ENCODE measurements at regions of chr7 and their contacts with region 1.

Region 1: DNA sequence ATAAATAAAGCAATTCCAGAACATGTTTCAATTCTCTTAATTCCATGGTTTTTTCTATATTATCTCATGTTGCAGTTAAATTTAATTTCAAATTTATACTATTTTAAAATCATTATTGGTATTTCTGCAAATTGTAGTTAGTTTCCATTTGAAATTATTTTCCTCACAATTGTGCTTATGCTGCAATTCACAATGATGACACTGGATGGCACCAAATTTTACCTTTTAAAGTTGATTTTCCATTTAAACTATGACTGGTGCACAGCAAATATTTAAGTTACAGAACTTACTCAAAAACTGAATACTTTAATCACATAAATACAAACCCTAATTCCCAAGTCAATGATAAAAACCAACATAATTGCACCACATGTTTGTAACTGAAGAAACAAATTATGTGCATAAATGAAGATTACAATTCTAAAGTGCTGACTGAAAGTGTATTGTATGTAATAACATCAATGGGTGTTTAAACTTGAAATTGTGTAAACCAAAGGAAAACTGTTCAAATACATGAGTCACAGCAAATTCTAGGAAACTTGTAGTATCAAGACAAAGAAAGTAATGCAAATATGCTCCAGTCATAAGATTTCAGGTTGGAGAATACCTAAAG is 75.3 kb upstream of the AASS start:
- DNase-seq: peak; percentile 62
- H3K4me3 ChIP-seq: no peak overlapping the region
- H3K27ac ChIP-seq: no peak overlapping the region
- H3K4me1 ChIP-seq: peaks cover 8% of the 10 kb centered on the region
- H3K27me3 ChIP-seq: no peaks in the 10 kb centered on the region
- CTCF ChIP-seq: peak; percentile 86

Region 2: GRCh38 chr7:121449329-121449728 is 770.0 kb before region 1 on chr7:
- CTCF ChIA-PET with region 1: no interaction called
- POLR2A ChIA-PET with region 1: no interaction called
- intact Hi-C with region 1: no loop called
- DNase-seq: peak; percentile 70
- H3K4me3 ChIP-seq: no peak overlapping the region
- H3K27ac ChIP-seq: peak overlapping the region; percentile 32
- H3K4me1 ChIP-seq: peaks cover 44% of the 10 kb centered on the region
- H3K27me3 ChIP-seq: no peaks in the 10 kb centered on the region
- CTCF ChIP-seq: peak; percentile 42

Region 3: GRCh38 chr7:122092964-122093797 is 126.2 kb before region 1 on chr7:
- CTCF ChIA-PET with region 1: no interaction called
- POLR2A ChIA-PET with region 1: no interaction called
- intact Hi-C with region 1: loop called (anchors 10 kb)
- DNase-seq: peak; percentile 82
- H3K4me3 ChIP-seq: no peak overlapping the region
- H3K27ac ChIP-seq: no peak overlapping the region
- H3K4me1 ChIP-seq: no peaks in the 10 kb centered on the region
- H3K27me3 ChIP-seq: no peaks in the 10 kb centered on the region
- CTCF ChIP-seq: peak; percentile 93

Region 4: GRCh38 chr7:122528879-122529481 is 309.6 kb after region 1 on chr7:
- CTCF ChIA-PET with region 1: interaction called, 3 read pairs
- POLR2A ChIA-PET with region 1: no interaction called
- intact Hi-C with region 1: loop called (anchors 1 kb)
- DNase-seq: peak; percentile 70
- H3K4me3 ChIP-seq: no peak overlapping the region
- H3K27ac ChIP-seq: no peak overlapping the region
- H3K4me1 ChIP-seq: peaks cover 23% of the 10 kb centered on the region
- H3K27me3 ChIP-seq: no peaks in the 10 kb centered on the region
- CTCF ChIP-seq: peak; percentile 67

Region 5: GRCh38 chr7:123148855-123149254 is 929.5 kb after region 1 on chr7:
- CTCF ChIA-PET with region 1: no interaction called
- POLR2A ChIA-PET with region 1: no interaction called
- intact Hi-C with region 1: loop called (anchors 5 kb)
- DNase-seq: peak; percentile 40
- H3K4me3 ChIP-seq: no peak overlapping the region
- H3K27ac ChIP-seq: no peak overlapping the region
- H3K4me1 ChIP-seq: peaks cover 16% of the 10 kb centered on the region
- H3K27me3 ChIP-seq: no peaks in the 10 kb centered on the region
- CTCF ChIP-seq: peak; percentile 48